CD4-positive, alpha-beta memory T cell (primary cell): ENCODE measurements at regions of chr4 and their contacts with region 1.

Region 1: GRCh38 chr4:40316782-40317635 is 18.1 kb upstream of the CHRNA9 start:
- DNase-seq: peak; percentile 75 to 81 (median 78)
- H3K4me3 ChIP-seq: peak overlapping the region; percentile 7 to 55
- H3K4me3 Mint-ChIP-seq: peak overlapping the region; percentile 74 to 90 (median 84)
- H3K27ac ChIP-seq: peak overlapping the region; percentile 82
- H3K27ac Mint-ChIP-seq: peak overlapping the region; percentile 92 to 97 (median 95)
- H3K4me1 ChIP-seq: peaks cover 31% of the 10 kb centered on the region
- H3K4me1 Mint-ChIP-seq: peaks cover 15 to 37% (median 27%) of the 10 kb centered on the region in 4 donors
- H3K27me3 ChIP-seq: no peaks in the 10 kb centered on the region
- H3K27me3 Mint-ChIP-seq: no peaks in the 10 kb centered on the region

Region 2: DNA sequence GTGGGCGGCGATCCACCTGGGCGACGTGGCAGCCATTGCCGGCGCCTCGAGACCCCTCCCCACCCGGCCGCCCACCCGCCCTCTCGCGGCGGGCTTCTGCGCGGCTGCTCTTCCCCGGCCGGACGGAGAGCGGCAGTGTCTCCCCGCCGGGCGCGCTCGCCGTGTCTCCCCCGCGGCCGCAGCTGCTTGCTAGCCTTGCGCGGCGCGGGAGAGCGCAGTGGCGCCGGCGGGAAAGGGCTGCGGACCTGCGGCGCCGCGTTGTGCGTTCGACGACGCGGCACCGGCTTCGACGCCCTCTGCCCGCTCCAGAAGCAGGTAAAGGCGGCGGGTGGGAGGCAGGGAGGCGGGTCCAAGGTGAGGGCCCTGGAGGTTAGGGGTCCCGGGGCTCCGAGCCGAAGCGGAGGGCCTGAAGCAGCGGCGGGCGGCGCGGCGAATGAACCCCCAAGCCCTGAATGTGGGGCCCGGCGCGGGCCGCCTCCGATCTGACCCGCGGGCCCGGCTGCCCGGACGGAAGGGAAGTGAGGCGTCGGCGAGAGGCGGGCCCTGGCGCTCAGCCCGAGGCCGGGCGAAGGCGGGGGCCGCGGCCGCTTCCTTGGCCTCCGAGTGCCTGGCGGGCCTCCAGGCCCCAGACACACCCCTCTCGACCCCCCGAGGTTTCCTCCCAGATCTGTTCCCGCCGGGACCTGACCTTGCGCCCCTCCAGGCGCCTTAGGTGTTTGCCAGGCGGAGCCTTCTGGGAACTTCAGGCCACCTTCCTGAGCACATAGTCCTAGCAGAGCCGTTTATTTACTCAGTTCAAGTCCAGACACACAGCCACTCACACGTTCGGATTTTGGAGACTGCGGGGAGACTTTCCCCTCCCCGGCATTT is 260.1 kb before region 1 on chr4 and contains the start of gene N4BP2:
- CTCF ChIA-PET with region 1: interaction called, 17 read pairs
- POLR2A ChIA-PET with region 1: interaction called, 52 read pairs
- intact Hi-C with region 1: loop called (anchors 2 kb)
- DNase-seq: peak; percentile 60 to 78 (median 75)
- H3K4me3 ChIP-seq: peak within 1 kb of the TSS; percentile 82 to 100
- H3K4me3 Mint-ChIP-seq: peak within 1 kb of the TSS; percentile 93 to 99 (median 97)
- H3K27ac ChIP-seq: peak within 1 kb of the TSS; percentile 75
- H3K27ac Mint-ChIP-seq: peak within 1 kb of the TSS; percentile 93 to 99 (median 97)
- H3K4me1 ChIP-seq: peaks cover 36% of the 10 kb centered on the region
- H3K4me1 Mint-ChIP-seq: peaks cover 18 to 48% (median 32%) of the 10 kb centered on the region in 4 donors
- H3K27me3 ChIP-seq: no peaks in the 10 kb centered on the region
- H3K27me3 Mint-ChIP-seq: no peaks in the 10 kb centered on the region
- total RNA-seq, gene N4BP2: 15.0 to 16.7 TPM

Region 3: DNA sequence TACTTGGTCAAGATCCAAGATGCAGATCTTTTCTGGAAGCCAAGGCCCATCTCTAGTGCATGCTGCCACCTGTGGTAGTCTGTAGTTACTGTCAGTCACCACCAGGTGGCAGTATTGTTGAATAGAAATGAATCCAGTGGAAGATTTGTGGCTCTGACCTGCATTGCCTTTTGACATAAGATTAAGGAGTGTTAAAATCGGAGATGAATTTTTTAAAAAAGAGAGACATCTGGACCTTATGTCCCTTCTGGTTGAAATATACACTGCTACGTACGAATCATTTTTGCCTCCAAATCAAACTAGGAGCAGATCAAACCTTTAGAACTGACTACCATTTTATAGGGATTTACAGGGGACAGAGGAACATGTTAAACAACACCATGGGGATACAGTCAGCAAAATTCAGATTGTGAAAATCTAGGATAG is 167.0 kb before region 1 on chr4:
- CTCF ChIA-PET with region 1: interaction called, 153 read pairs
- POLR2A ChIA-PET with region 1: interaction called, 17 read pairs
- intact Hi-C with region 1: loop called (anchors 2 kb)
- DNase-seq: peak; percentile 75 to 81 (median 77)
- H3K4me3 ChIP-seq: no peak overlapping the region
- H3K4me3 Mint-ChIP-seq: peak overlapping the region in 2 of 8 donors; percentile 44 to 65
- H3K27ac ChIP-seq: no peak overlapping the region
- H3K27ac Mint-ChIP-seq: peak overlapping the region; percentile 27 to 91 (median 77)
- H3K4me1 ChIP-seq: peaks cover 22% of the 10 kb centered on the region
- H3K4me1 Mint-ChIP-seq: peaks cover 20 to 34% (median 25%) of the 10 kb centered on the region in 4 donors
- H3K27me3 ChIP-seq: no peaks in the 10 kb centered on the region
- H3K27me3 Mint-ChIP-seq: no peaks in the 10 kb centered on the region

Region 4: DNA sequence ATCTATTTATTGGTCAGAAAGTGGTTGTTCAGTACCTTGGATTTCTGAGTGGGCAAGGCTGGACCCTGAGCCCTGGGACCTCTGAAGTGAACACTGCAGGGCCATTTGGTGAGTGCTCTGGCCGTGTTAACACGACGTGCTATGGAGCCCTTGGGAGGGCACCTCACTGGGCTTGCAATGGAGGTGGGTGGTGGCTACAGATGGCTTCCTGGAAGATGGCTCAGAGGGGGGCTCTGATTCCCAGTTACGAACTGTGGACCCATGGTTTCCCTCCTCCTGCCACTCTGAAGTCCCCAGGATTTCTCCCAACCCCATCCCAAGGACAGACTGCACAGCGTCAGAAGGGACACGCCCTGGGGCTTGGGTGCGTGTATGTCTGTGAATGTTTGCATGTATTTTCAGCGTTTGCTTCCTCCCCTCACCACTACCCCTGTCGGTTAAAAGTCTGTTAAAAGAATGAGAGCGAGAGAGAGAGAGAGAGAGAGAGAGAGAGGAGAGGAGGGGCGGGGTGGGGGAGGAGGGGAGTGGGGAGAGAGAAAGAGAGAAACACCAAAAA is 123.9 kb before region 1 on chr4:
- CTCF ChIA-PET with region 1: interaction called, 115 read pairs
- POLR2A ChIA-PET with region 1: interaction called, 179 read pairs
- intact Hi-C with region 1: no loop called
- DNase-seq: peak in 4 of 5 donors; percentile 53 to 62 (median 57)
- H3K4me3 ChIP-seq: peak overlapping the region; percentile 12 to 42
- H3K4me3 Mint-ChIP-seq: peak overlapping the region; percentile 78 to 96 (median 88)
- H3K27ac ChIP-seq: peak overlapping the region; percentile 99
- H3K27ac Mint-ChIP-seq: peak overlapping the region; percentile 96 to 100 (median 100)
- H3K4me1 ChIP-seq: peaks cover 52% of the 10 kb centered on the region
- H3K4me1 Mint-ChIP-seq: peaks cover 40 to 84% (median 56%) of the 10 kb centered on the region in 4 donors
- H3K27me3 ChIP-seq: no peaks in the 10 kb centered on the region
- H3K27me3 Mint-ChIP-seq: no peaks in the 10 kb centered on the region

Region 5: GRCh38 chr4:40238700-40239548 is 78.1 kb before region 1 on chr4:
- CTCF ChIA-PET with region 1: interaction called, 200 read pairs
- POLR2A ChIA-PET with region 1: interaction called, 3 read pairs
- intact Hi-C with region 1: no loop called
- DNase-seq: peak; percentile 85 to 97 (median 87)
- H3K4me3 ChIP-seq: peak overlapping the region; percentile 48 to 53
- H3K4me3 Mint-ChIP-seq: peak overlapping the region; percentile 73 to 87 (median 80)
- H3K27ac ChIP-seq: peak overlapping the region; percentile 89
- H3K27ac Mint-ChIP-seq: peak overlapping the region; percentile 95 to 100 (median 97)
- H3K4me1 ChIP-seq: peaks cover 98% of the 10 kb centered on the region
- H3K4me1 Mint-ChIP-seq: peaks cover 73 to 96% (median 86%) of the 10 kb centered on the region in 4 donors
- H3K27me3 ChIP-seq: no peaks in the 10 kb centered on the region
- H3K27me3 Mint-ChIP-seq: no peaks in the 10 kb centered on the region

Region 6: GRCh38 chr4:40283968-40284367 is 33.0 kb before region 1 on chr4:
- CTCF ChIA-PET with region 1: interaction called, 271 read pairs
- POLR2A ChIA-PET with region 1: interaction called, 17 read pairs
- intact Hi-C with region 1: loop called (anchors 1 kb)
- DNase-seq: peak; percentile 71 to 97 (median 86)
- H3K4me3 ChIP-seq: no peak overlapping the region
- H3K4me3 Mint-ChIP-seq: peak overlapping the region in 7 of 8 donors; percentile 70 to 86 (median 79)
- H3K27ac ChIP-seq: peak overlapping the region; percentile 49
- H3K27ac Mint-ChIP-seq: peak overlapping the region; percentile 92 to 98 (median 96)
- H3K4me1 ChIP-seq: peaks cover 39% of the 10 kb centered on the region
- H3K4me1 Mint-ChIP-seq: peaks cover 34 to 73% (median 55%) of the 10 kb centered on the region in 4 donors
- H3K27me3 ChIP-seq: no peaks in the 10 kb centered on the region
- H3K27me3 Mint-ChIP-seq: peaks cover 0 to 2% of the 10 kb centered on the region in 2 donors

Region 7: DNA sequence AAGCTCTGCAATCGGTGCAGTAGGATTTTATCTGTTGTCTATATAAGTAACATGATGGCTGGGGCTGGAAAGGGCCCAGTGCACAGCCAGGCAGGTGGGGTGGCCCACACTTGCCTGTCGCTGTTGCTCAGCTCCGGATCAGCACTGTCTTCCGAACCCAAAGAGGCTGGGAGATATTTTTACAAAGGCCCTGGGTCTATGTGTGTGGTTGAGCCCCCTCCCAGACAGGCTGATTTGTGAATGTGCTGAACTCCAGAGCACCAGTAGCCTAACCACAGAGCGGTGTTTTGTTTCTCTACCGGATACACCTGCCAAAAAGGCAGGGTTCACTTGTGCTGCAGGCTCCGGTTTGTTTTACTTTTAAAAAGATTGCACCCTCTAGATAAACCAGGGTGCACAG is 15.4 kb before region 1 on chr4:
- CTCF ChIA-PET with region 1: interaction called, 99 read pairs
- POLR2A ChIA-PET with region 1: interaction called, 18 read pairs
- intact Hi-C with region 1: no loop called
- DNase-seq: peak; percentile 82 to 90 (median 89)
- H3K4me3 ChIP-seq: peak overlapping the region in 1 of 2 donors; percentile 2
- H3K4me3 Mint-ChIP-seq: peak overlapping the region; percentile 23 to 92 (median 78)
- H3K27ac ChIP-seq: peak overlapping the region; percentile 62
- H3K27ac Mint-ChIP-seq: peak overlapping the region in 6 of 7 donors; percentile 96 to 99 (median 97)
- H3K4me1 ChIP-seq: peaks cover 94% of the 10 kb centered on the region
- H3K4me1 Mint-ChIP-seq: peaks cover 66 to 90% (median 79%) of the 10 kb centered on the region in 4 donors
- H3K27me3 ChIP-seq: no peaks in the 10 kb centered on the region
- H3K27me3 Mint-ChIP-seq: no peaks in the 10 kb centered on the region

Region 8: DNA sequence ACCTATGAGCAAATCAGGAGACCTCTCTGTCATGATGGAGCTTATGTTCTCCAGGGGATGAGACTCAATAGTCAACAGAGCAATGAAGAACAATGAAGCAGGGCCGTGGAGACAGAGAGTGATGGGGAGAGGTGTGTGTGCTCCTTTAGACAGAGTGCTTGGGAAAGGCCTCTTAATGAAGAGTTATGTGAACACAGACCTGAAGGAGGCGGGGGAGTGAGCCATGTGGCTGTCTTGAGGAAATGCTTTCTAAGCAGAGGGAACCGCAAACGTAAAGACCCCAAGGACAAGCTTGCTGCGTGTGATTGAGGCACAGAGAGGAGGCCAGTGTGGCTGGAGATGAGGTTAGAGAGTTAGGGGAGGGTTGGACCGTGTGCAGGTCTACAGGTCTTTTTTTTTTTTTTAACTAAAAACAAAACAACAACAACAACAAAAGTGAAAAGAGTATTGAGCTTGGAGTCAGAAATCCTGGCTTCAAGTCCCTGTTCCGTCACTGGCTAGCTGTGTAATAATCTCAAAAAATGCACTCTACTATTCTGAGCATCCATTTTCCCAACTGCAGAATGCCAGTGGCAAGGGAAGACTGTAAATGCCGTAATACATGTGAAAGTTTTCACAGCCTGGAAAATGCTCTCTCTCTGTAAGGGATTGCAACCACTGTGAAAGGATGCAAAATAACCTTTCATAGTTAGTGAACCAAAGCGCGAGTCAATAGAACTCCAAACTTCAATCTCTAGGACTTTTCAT is 71.4 kb after region 1 on chr4:
- CTCF ChIA-PET with region 1: no interaction called
- POLR2A ChIA-PET with region 1: no interaction called
- intact Hi-C with region 1: no loop called
- DNase-seq: no peak
- H3K4me3 ChIP-seq: no peak overlapping the region
- H3K4me3 Mint-ChIP-seq: no peak overlapping the region
- H3K27ac ChIP-seq: no peak overlapping the region
- H3K27ac Mint-ChIP-seq: no peak overlapping the region
- H3K4me1 ChIP-seq: no peaks in the 10 kb centered on the region
- H3K4me1 Mint-ChIP-seq: peaks cover 0 to 4% (median 0%) of the 10 kb centered on the region in 4 donors
- H3K27me3 ChIP-seq: no peaks in the 10 kb centered on the region
- H3K27me3 Mint-ChIP-seq: no peaks in the 10 kb centered on the region

Region 9: DNA sequence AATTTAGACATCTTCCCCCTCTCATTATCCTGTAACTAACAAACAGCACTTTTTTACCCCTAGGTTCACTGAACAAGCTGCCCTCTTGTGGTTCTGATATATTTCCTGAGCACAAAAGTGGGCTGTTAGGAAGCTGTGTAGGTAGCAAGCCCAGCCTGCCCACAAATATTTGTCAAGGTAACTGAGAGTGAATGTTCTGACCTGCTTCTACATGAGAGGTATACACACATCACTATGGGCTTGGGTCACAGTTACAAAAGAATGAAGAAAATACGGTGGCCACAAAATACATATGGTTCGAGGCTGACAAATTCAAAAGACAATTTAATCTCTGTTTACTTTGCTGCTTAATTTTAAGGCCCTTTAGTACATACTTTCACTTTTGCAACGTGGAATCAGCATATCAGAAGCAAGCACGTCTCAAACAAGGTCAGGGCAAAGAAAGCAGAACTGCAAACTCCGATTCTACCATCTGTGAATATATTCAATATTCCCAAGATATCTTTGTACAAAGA is 234.0 kb after region 1 on chr4:
- CTCF ChIA-PET with region 1: no interaction called
- POLR2A ChIA-PET with region 1: no interaction called
- intact Hi-C with region 1: no loop called
- DNase-seq: peak in 4 of 5 donors; percentile 31 to 57 (median 50)
- H3K4me3 ChIP-seq: peak overlapping the region; percentile 8 to 12
- H3K4me3 Mint-ChIP-seq: peak overlapping the region; percentile 68 to 87 (median 82)
- H3K27ac ChIP-seq: peak overlapping the region; percentile 32
- H3K27ac Mint-ChIP-seq: peak overlapping the region; percentile 67 to 97 (median 87)
- H3K4me1 ChIP-seq: no peaks in the 10 kb centered on the region
- H3K4me1 Mint-ChIP-seq: peaks cover 7 to 26% (median 10%) of the 10 kb centered on the region in 4 donors
- H3K27me3 ChIP-seq: no peaks in the 10 kb centered on the region
- H3K27me3 Mint-ChIP-seq: no peaks in the 10 kb centered on the region